ENCODE measurements at regions of chr4 and their contacts with region 1.

Region 1: GRCh38 chr4:77240469-77241066 is 83.6 kb downstream of the CCNG2 start:
- ATAC-seq: peak; percentile 47 to 95 (median 76)
- H3K4me3 ChIP-seq: no peak overlapping the region
- H3K27ac ChIP-seq: no peak overlapping the region
- H3K4me1 ChIP-seq: no peaks in the 10 kb centered on the region

Region 2: GRCh38 chr4:76867880-76868655 is 372.5 kb before region 1 on chr4:
- in situ Hi-C with region 1: no loop called
- ATAC-seq: no peak
- H3K4me3 ChIP-seq: no peak overlapping the region
- H3K27ac ChIP-seq: no peak overlapping the region
- H3K4me1 ChIP-seq: no peaks in the 10 kb centered on the region

Region 3: GRCh38 chr4:77308843-77309242 is 68.3 kb after region 1 on chr4:
- in situ Hi-C with region 1: loop called in 1 of 9 experiments (anchors 10 kb)
- ATAC-seq: peak in 3 of 8 experiments; percentile 29 to 87 (median 64)
- H3K4me3 ChIP-seq: no peak overlapping the region
- H3K27ac ChIP-seq: no peak overlapping the region
- H3K4me1 ChIP-seq: no peaks in the 10 kb centered on the region

Region 4: GRCh38 chr4:77358315-77358928 is 117.9 kb after region 1 on chr4:
- in situ Hi-C with region 1: loop called in 2 of 9 experiments (anchors 5 to 25 kb)
- ATAC-seq: peak in 7 of 8 experiments; percentile 46 to 83 (median 72)
- H3K4me3 ChIP-seq: no peak overlapping the region
- H3K27ac ChIP-seq: no peak overlapping the region
- H3K4me1 ChIP-seq: no peaks in the 10 kb centered on the region

Region 5: DNA sequence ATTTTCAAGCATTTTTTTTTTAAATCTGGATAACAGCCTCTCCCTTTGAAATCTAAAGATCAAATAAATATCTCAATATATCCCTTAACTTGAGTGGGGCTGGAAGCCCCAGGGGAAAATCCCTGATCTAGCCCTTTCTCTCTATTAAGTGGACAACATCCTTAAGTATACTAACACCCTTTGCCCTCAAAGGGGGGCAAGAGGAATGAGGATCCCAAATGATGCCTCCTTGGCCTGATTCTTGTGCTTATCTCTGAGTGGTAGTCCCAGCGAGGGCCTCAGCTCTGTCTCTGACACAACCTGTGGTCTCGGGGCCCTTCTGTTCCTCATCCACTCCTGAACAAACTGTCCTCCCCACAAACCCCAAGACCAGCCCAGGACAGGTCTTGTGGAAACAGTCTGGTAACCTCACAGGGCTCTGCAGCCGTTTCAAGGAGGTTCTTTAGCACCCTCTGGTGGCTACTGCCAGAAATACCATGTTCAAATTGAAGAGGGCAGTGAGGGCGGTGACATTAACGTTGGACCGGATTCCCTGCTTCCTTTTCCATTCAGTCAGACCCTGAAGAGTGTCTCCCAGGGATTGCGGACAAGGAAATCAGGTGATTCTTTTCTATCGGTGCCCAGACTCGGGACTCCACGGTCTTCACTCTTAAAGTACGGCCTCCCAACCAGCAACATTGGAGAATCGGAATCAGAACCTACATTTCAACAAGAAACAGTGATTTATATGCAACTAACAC is 378.0 kb after region 1 on chr4:
- in situ Hi-C with region 1: loop called in 1 of 9 experiments (anchors 25 kb)
- ATAC-seq: peak; percentile 84 to 99 (median 92)
- H3K4me3 ChIP-seq: no peak overlapping the region
- H3K27ac ChIP-seq: no peak overlapping the region
- H3K4me1 ChIP-seq: no peaks in the 10 kb centered on the region